ENCODE measurements at regions of chr9 and their contacts with region 1.

Region 1: GRCh38 chr9:79165019-79165780 is 406.6 kb upstream of the TLE4 start:
- DNase-seq: no peak
- ATAC-seq: no peak
- H3K4me3 ChIP-seq: no peak overlapping the region
- H3K27ac ChIP-seq: no peak overlapping the region
- H3K4me1 ChIP-seq: no peaks in the 10 kb centered on the region
- H3K27me3 ChIP-seq: no peaks in the 10 kb centered on the region
- CTCF ChIP-seq: no peak

Region 2: DNA sequence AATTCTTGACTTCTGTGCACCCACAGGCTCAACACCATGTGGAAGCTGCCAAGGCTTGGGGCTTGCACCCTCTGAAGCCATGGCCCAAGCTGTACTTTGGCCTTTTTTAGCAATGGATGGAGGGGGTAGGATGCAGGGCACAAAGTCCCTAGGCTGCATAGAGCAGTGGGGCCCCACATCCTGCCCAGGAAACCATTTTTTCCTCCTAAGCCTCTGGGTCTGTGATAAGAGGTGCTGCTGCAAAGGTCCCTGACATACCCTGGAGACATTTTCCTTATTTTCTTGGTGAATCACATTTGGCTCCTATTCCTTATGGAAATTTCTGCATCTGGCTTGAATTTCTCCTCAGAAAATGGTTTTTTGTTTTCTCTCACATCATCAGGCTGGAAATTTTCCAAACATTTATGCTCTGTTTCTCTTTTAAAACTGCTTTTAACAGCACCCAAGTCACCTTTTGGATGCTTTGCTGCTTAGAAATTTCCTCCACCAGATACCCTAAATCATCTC is 76.1 kb before region 1 on chr9:
- intact Hi-C with region 1: no loop called
- DNase-seq: no peak
- ATAC-seq: no peak
- H3K4me3 ChIP-seq: no peak overlapping the region
- H3K27ac ChIP-seq: no peak overlapping the region
- H3K4me1 ChIP-seq: no peaks in the 10 kb centered on the region
- H3K27me3 ChIP-seq: no peaks in the 10 kb centered on the region
- CTCF ChIP-seq: no peak

Region 3: DNA sequence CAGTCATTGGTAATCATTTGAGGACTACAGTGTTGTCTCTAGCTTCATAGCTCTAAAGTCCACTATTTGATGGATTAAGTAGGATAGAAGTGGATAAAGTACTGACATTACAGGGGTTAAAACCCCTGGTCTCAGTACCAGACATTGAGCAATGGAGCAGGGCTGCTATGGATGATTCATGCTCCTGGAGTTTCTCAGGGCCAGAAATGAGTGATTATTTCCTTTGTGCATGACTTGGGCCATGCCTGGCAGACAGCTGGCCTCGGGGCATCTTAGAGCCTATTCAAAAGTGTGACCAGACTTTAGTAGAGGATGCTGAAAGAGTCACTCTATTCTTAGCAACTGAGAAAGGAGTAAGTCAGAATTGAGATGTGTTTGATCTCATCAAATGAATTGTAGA is 55.9 kb after region 1 on chr9:
- intact Hi-C with region 1: no loop called
- DNase-seq: no peak
- ATAC-seq: no peak
- H3K4me3 ChIP-seq: no peak overlapping the region
- H3K27ac ChIP-seq: no peak overlapping the region
- H3K4me1 ChIP-seq: no peaks in the 10 kb centered on the region
- H3K27me3 ChIP-seq: no peaks in the 10 kb centered on the region
- CTCF ChIP-seq: no peak

Region 4: DNA sequence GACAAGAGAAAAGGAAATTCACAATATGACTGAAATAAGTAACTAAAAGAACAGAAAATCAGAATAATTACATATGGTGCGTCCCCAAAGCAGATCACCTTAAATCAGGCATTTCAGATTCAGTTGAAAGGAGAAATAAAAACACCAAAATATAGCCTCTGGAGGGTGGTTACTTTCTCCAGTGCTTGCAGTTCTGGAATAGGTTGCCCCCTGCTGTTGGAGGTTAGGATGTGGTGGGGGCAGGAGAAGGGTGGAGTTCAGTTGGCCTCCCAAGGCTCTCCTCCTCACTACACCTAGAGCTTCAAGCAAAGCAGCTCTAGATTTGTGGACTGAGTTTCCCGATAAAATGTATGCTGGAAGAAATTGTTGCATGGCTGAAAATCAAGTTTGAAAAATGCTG is 68.3 kb after region 1 on chr9:
- intact Hi-C with region 1: loop called in 1 of 10 experiments (anchors 10 kb)
- DNase-seq: no peak
- ATAC-seq: no peak
- H3K4me3 ChIP-seq: no peak overlapping the region
- H3K27ac ChIP-seq: no peak overlapping the region
- H3K4me1 ChIP-seq: no peaks in the 10 kb centered on the region
- H3K27me3 ChIP-seq: no peaks in the 10 kb centered on the region
- CTCF ChIP-seq: peak in 3 of 9 donors; percentile 6 to 30 (median 13)